Ascending aorta (tissue), 2 donors: ENCODE measurements at regions of chr12 and their contacts with region 1.

Region 1: GRCh38 chr12:25386831-25387731 is 136.4 kb upstream of the KRAS start:
- DNase-seq: peak in 1 of 2 donors; percentile 92
- H3K4me3 ChIP-seq: peak overlapping the region; percentile 76 to 84
- H3K27ac ChIP-seq: peak overlapping the region; percentile 100
- H3K4me1 ChIP-seq: peaks cover 0 to 7% of the 10 kb centered on the region in 2 donors
- H3K27me3 ChIP-seq: no peaks in the 10 kb centered on the region
- CTCF ChIP-seq: peak; percentile 69 to 86 (median 84)

Region 2: DNA sequence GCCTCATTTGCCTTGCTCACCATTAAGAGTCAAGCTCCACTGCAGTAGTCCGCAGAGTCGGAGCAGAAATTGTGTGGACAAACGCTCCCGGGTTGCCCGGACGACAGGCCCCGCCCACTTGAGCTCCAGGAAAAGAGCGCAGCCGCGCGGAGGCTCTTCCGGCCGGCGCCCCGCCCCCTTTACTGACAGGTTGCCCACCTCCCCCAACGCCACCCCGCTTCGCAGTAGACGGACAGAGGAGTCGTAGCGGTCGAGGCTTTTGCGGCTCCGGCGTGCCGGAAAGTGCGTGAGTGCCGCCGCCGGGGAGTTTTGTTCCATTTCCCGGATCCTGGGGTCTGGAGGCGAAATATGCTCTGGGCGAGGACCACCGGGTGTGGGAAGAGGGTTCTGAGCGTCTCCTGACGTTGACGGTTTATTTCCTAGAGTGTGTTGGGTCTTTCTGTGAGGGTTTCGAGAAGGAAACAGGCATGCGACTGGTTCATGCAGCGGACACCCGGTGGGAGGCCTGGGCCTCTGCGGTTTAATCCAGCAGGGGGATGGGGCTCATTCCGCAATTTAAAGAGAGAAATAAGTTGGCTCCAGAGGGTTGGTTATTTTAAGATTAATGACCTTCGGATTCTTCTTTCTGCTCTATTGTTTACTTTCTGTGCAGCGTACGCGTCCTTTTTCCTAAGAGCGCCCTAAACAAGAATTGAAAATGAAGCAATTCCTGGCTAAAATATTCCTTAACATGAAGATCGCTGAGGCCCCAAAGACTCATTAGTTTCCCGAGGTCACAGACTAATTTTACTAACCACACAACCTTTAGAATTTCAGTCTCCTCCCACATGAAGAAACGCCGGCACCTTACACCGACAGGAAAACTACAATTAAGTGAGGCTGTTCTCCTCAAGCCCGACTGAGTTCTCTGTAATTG is 191.8 kb before region 1 on chr12 and contains the starts of genes DNAI7 and ETFRF1:
- intact Hi-C with region 1: loop called (anchors 1 kb)
- DNase-seq: peak; percentile 90 to 99
- H3K4me3 ChIP-seq: peak within 1 kb of the TSS; percentile 84 to 85
- H3K27ac ChIP-seq: peak within 1 kb of the TSS; percentile 97
- H3K4me1 ChIP-seq: peaks cover 3 to 9% of the 10 kb centered on the region in 2 donors
- H3K27me3 ChIP-seq: no peaks in the 10 kb centered on the region
- CTCF ChIP-seq: peak in 1 of 3 experiments; percentile 9
- total RNA-seq, gene DNAI7: not detected
- total RNA-seq, gene ETFRF1: 0.85 TPM

Region 3: GRCh38 chr12:25208554-25208953 is 178.5 kb before region 1 on chr12:
- intact Hi-C with region 1: loop called (anchors 1 kb)
- DNase-seq: no peak
- H3K4me3 ChIP-seq: no peak overlapping the region
- H3K27ac ChIP-seq: no peak overlapping the region
- H3K4me1 ChIP-seq: no peaks in the 10 kb centered on the region
- H3K27me3 ChIP-seq: no peaks in the 10 kb centered on the region
- CTCF ChIP-seq: no peak